Activated CD4-positive, alpha-beta memory T cell treated with anti-CD3 and anti-CD28 coated beads for 36 hours (primary cell): ENCODE measurements at regions of chr15 and their contacts with region 1.

Region 1: DNA sequence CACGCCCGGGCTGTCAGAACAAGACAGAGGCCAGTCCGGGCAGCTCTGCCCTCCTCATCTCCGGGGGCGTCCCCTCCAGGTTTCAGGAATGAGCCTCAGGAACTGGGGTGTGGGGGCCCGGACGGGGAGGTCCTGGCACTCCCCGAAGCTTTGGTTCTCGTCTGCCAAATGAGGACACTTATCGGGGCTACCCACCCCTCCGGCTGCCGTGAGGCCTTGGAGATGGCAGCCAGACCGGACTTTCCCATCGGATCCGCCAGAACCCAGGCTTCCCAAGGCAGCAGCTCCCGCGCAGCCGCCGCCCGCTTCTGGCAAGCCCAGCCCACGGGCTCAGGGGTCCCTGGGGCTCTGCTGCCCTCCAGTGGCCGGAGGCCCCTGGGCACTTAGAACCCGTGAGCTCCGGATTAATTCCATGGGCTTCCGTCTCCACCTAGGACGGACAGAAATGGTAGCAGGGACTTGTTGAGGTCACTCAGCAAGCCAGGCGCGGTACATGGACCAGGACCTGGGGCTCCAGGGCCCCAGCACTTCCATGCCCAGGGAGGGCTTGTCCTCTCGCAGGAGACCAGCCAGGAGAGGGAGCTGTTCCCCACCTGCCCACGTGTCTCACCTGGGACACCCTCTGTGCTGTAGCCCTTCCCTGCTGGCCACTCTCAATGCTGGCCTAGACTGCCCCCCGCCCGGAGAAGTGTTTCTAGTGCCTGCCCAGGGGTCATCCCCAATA is 89.4 kb downstream of the LINGO1 start:
- DNase-seq: peak; percentile 82
- H3K4me3 Mint-ChIP-seq: peak overlapping the region; percentile 73
- H3K27ac Mint-ChIP-seq: no peak overlapping the region
- H3K4me1 Mint-ChIP-seq: peaks cover 8% of the 10 kb centered on the region
- H3K27me3 Mint-ChIP-seq: peaks cover 1% of the 10 kb centered on the region

Region 2: DNA sequence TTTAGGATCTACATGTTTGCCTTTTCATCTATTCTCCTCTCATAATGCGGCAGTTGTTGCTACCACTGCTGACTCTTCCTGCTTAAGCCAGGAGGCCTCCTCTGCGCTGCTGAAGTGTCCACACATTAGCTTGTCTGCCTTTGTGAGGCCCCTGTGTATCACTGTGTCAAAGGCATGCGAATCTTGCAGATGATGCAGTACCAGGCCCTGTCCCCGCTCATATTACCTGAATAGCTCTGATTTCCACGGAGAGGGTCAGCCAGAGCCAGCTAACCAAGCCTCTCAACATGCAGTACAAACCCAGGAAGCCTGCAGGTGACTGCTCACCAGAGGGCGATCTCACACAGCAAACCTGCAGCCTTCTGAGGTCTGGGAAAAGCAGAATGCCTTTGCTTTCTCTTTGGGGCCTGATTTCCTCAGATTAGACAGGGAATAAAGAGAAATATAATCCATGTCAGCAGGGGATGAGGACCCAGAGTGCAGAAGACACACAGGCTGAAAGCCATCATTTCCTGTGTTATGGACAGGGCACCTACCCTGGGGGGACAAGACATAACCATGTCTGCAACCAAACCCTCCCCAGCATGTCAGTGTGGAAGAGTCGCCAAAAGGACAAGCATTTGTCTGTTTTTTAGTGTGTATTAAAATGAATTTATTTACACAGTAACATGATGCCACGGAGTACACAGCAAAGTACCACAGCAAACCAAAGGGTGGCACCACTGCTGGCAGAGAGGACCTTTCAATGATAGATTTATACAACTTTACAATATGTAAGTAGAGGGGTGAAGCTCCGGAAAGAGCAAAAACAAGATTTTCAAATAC is 435.6 kb before region 1 on chr15:
- CTCF ChIA-PET with region 1: interaction called, 18 read pairs
- POLR2A ChIA-PET with region 1: no interaction called
- intact Hi-C with region 1: loop called (anchors 1 kb)
- DNase-seq: peak; percentile 61
- H3K4me3 Mint-ChIP-seq: no peak overlapping the region
- H3K27ac Mint-ChIP-seq: no peak overlapping the region
- H3K4me1 Mint-ChIP-seq: no peaks in the 10 kb centered on the region
- H3K27me3 Mint-ChIP-seq: no peaks in the 10 kb centered on the region

Region 3: DNA sequence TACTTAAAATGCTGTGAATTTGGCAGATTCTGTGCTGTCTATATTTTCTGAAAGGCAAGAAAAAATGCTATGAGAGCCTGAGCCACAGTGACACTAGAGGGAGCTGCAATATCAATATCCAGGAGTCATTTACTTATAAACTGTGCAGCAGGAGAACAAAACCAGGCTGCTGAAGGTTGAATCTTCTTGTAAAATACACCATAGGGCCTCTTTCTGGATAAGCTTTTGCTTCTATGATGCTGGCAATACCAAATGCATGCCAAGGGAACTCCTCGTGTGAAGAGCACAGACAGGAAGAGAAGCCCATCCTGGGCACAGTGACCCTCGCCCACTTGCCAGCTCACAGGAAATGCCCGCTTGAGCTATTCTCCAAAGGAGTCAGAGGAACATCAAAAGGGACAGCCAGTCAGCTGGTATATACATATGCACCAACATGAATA is 424.4 kb before region 1 on chr15:
- CTCF ChIA-PET with region 1: interaction called, 44 read pairs
- POLR2A ChIA-PET with region 1: no interaction called
- intact Hi-C with region 1: loop called (anchors 1 kb)
- DNase-seq: peak; percentile 42
- H3K4me3 Mint-ChIP-seq: no peak overlapping the region
- H3K27ac Mint-ChIP-seq: no peak overlapping the region
- H3K4me1 Mint-ChIP-seq: peaks cover 5% of the 10 kb centered on the region
- H3K27me3 Mint-ChIP-seq: no peaks in the 10 kb centered on the region

Region 4: DNA sequence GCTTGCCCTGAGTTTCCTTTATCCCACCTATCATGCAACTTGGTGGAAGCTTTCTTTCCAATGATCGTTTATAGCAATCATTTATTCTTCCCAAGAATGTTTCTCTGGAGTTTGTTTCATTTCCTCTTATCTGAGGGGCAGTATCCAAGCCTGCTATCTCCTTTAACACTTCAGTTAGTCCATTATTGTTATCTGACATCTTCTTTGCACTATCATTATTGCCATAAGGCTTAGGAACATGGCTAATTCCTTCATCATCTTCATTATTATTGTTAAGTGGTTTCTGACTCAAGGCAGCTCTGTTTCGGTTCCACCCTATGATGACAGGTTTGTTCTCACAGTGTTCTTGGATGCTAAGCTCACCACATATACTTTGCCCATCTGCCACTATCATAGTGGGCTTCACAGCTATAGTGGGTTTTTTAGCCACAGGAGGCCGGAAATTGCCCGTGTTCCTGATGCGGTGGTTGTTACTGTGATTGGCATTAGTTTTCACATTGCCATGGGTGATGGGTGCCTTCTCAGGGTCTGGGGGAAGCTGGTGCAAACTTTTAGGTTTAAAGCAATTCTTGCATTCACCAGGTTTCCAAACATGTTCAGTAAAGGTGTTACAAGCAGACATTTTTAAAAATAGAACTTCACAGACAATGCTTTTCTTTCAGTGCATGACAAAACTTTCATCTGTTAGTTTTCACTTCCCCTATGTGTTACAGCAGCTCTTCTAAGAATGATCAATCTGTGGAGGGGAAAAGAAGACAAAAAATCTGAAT is 361.8 kb before region 1 on chr15:
- CTCF ChIA-PET with region 1: interaction called, 40 read pairs
- POLR2A ChIA-PET with region 1: no interaction called
- intact Hi-C with region 1: no loop called
- DNase-seq: no peak
- H3K4me3 Mint-ChIP-seq: no peak overlapping the region
- H3K27ac Mint-ChIP-seq: no peak overlapping the region
- H3K4me1 Mint-ChIP-seq: peaks cover 39% of the 10 kb centered on the region
- H3K27me3 Mint-ChIP-seq: no peaks in the 10 kb centered on the region

Region 5: DNA sequence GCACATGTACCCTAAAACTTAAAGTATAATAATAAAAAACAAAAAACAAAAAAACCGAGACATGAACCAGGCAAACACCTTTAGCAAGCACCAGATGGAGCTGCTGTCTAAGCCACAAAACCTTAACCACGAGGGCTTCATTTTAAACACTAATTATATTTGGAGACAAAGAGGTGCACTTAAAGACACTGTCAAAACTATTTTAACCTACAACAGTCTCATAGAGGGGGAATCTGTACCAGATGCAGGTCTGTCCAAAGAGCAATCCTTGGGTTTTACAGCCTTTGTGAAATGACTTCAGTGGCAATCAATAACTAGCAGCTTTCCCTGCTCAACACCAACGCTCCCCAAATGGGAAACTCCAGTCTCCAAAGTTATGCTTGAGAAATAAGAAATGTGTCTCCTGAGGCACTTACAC is 356.7 kb before region 1 on chr15:
- CTCF ChIA-PET with region 1: interaction called, 40 read pairs
- POLR2A ChIA-PET with region 1: no interaction called
- intact Hi-C with region 1: no loop called
- DNase-seq: no peak
- H3K4me3 Mint-ChIP-seq: no peak overlapping the region
- H3K27ac Mint-ChIP-seq: no peak overlapping the region
- H3K4me1 Mint-ChIP-seq: peaks cover 39% of the 10 kb centered on the region
- H3K27me3 Mint-ChIP-seq: no peaks in the 10 kb centered on the region